HAP-1 (cell line): ENCODE measurements at regions of chr3 and their contacts with region 1.

Region 1: DNA sequence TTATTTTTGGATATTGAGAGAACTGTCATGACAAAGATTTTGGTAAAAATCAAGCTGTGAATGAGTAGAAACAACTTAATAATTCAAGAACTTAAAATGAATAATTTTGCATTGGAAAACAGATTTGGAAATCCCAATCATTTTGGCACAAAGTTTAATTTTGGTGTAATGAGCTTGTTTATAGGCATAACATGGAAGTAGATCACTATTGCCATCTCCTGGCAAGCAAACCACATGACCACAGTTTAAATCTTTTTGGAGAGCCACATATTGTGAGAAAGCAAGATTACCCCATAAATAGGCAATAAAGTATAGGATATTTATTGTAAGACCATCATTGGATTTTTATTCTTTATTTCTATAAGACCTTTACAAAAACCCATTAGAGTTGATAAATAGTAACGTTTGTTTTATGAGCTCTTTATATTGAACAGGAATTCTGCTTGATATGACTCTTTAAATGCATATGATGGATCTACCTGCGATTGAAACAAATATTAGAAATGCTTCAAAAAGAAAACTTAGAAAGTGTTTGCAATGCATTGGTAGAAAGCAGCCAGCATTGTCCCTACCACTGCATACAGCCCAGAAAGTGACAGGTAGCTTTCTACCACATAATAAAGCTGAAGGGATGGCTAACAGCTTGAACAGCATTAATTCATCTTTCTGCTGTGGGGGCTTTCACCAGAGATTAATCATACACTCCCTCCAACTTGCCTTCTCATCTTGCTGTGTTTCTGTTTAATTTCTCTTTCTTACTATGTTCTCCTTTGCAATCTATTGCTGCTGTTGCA is 766.8 kb downstream of the TBL1XR1 start:
- DNase-seq: peak; percentile 26 to 55
- H3K4me3 ChIP-seq: no peak overlapping the region
- H3K4me1 ChIP-seq: peaks cover 9% of the 10 kb centered on the region
- H3K27me3 ChIP-seq: no peaks in the 10 kb centered on the region

Region 2: DNA sequence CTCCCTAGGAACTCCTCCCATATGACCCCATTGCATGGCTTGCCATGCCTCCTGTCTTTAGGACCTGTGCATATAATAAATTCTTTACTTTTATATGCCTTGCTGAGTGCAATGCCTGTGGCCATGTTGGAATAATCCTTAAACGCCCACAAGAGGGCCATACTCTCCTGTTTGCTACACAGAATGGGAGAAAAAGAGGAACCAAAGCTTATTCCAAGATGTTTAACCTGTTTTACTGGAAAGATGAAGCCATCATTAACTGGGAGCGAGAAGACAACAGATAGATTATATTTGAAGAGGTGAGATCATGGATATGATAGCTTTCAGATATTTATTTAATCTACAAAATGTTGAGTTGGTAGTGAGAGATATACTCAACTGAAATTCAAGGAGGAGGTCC is 473.4 kb before region 1 on chr3:
- in situ Hi-C with region 1: loop called (anchors 25 kb)
- DNase-seq: peak; percentile 22 to 24
- H3K4me3 ChIP-seq: no peak overlapping the region
- H3K4me1 ChIP-seq: peaks cover under 1% of the 10 kb centered on the region
- H3K27me3 ChIP-seq: no peaks in the 10 kb centered on the region